BJ (cell line): ENCODE measurements at regions of chr2 and their contacts with region 1.

Region 1: GRCh38 chr2:47309952-47310800 is 92.8 kb upstream of the MSH2 start:
- DNase-seq: no peak
- H3K4me3 ChIP-seq: no peak overlapping the region
- H3K27me3 ChIP-seq: no peaks in the 10 kb centered on the region
- CTCF ChIP-seq: no peak

Region 2: GRCh38 chr2:47272031-47272864 is 37.9 kb before region 1 on chr2:
- CTCF ChIA-PET with region 1: interaction called, 10 read pairs
- POLR2A ChIA-PET with region 1: no interaction called
- DNase-seq: no peak
- H3K4me3 ChIP-seq: peak overlapping the region; percentile 12
- H3K27me3 ChIP-seq: no peaks in the 10 kb centered on the region
- CTCF ChIP-seq: peak; percentile 82

Region 3: GRCh38 chr2:47295131-47295980 is 14.8 kb before region 1 on chr2:
- CTCF ChIA-PET with region 1: interaction called, 7 read pairs
- POLR2A ChIA-PET with region 1: interaction called, 16 read pairs
- DNase-seq: no peak
- H3K4me3 ChIP-seq: no peak overlapping the region
- H3K27me3 ChIP-seq: no peaks in the 10 kb centered on the region
- CTCF ChIP-seq: no peak